HCT116 (cell line): ENCODE measurements at regions of chr12 and their contacts with region 1.

Region 1: GRCh38 chr12:64256166-64256800 is 34.2 kb upstream of the KICS2 start:
- DNase-seq: peak; percentile 33
- ATAC-seq: peak; percentile 47; the same call in 1 of the 2 replicates
- H3K4me3 ChIP-seq: no peak overlapping the region
- H3K27ac ChIP-seq: no peak overlapping the region
- H3K4me1 ChIP-seq: no peaks in the 10 kb centered on the region
- H3K27me3 ChIP-seq: no peaks in the 10 kb centered on the region
- CTCF ChIP-seq: peak; percentile 42 to 94 (median 84); a peak in 5 of 6 replicates
- POLR2A ChIP-seq: no peak
- RAD21 ChIP-seq: peak; percentile 97

Region 2: GRCh38 chr12:63668028-63668799 is 588.1 kb before region 1 on chr12 and contains the start of gene DPY19L2:
- CTCF ChIA-PET with region 1: no interaction called
- POLR2A ChIA-PET with region 1: no interaction called
- RAD21 ChIA-PET with region 1: no interaction called
- intact Hi-C with region 1: loop called (anchors 10 kb)
- DNase-seq: no peak
- ATAC-seq: no peak
- H3K4me3 ChIP-seq: no peak within 1 kb of the TSS
- H3K27ac ChIP-seq: no peak within 1 kb of the TSS
- H3K4me1 ChIP-seq: no peaks in the 10 kb centered on the region
- H3K27me3 ChIP-seq: no peaks in the 10 kb centered on the region
- CTCF ChIP-seq: no peak
- POLR2A ChIP-seq: no peak
- RAD21 ChIP-seq: no peak
- total RNA-seq, gene DPY19L2: not detected

Region 3: DNA sequence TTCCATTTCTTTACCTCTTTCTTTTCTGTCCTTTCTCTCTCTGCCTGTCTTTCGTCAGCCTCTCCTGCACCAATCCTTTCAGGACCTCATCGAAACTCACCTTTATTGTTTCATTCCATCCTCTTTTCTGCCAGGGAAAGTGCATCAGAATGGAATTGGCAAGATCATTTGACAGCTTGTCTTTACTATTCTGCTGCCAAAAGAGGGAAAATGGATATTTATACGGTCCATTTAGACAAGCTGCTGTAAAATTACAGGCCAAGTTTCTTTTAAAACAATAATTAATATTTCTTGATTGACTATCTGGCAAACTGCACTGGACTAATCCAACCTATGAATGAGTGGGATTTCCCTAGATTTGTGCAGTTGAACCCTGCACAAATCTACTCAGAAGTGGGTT is 419.3 kb before region 1 on chr12:
- CTCF ChIA-PET with region 1: interaction called, 23 read pairs
- POLR2A ChIA-PET with region 1: no interaction called
- RAD21 ChIA-PET with region 1: interaction called in 1 of 2 experiments, 9 read pairs
- intact Hi-C with region 1: loop called (anchors 1 kb)
- DNase-seq: no peak
- ATAC-seq: no peak
- H3K4me3 ChIP-seq: no peak overlapping the region
- H3K27ac ChIP-seq: no peak overlapping the region
- H3K4me1 ChIP-seq: no peaks in the 10 kb centered on the region
- H3K27me3 ChIP-seq: no peaks in the 10 kb centered on the region
- CTCF ChIP-seq: no peak
- POLR2A ChIP-seq: no peak
- RAD21 ChIP-seq: no peak